ENCODE measurements at regions of chr1 and their contacts with region 1.

Region 1: GRCh38 chr1:32215629-32216480 is 6.3 kb downstream of the TMEM234 start:
- DNase-seq: peak in 8 of 9 experiments; percentile 16 to 74 (median 60)
- ATAC-seq: peak; percentile 97
- H3K4me3 ChIP-seq: no peak overlapping the region
- H3K4me3 Mint-ChIP-seq: no peak overlapping the region
- H3K27ac ChIP-seq: no peak overlapping the region
- H3K27ac Mint-ChIP-seq: peak overlapping the region; percentile 67
- H3K4me1 ChIP-seq: peaks cover 10% of the 10 kb centered on the region
- H3K4me1 Mint-ChIP-seq: peaks cover 14% of the 10 kb centered on the region
- H3K27me3 ChIP-seq: no peaks in the 10 kb centered on the region
- H3K27me3 Mint-ChIP-seq: no peaks in the 10 kb centered on the region
- CTCF ChIP-seq: peak; percentile 66

Region 2: GRCh38 chr1:32200226-32201010 is 15.4 kb before region 1 on chr1 and contains the start of gene CCDC28B:
- CTCF ChIA-PET with region 1: interaction called, 23 read pairs
- POLR2A ChIA-PET with region 1: interaction called, 4 read pairs
- intact Hi-C with region 1: no loop called
- DNase-seq: peak in 8 of 9 experiments; percentile 32 to 81 (median 64)
- ATAC-seq: peak; percentile 49
- H3K4me3 ChIP-seq: peak within 1 kb of the TSS; percentile 69 to 70
- H3K4me3 Mint-ChIP-seq: peak within 1 kb of the TSS; percentile 85
- H3K27ac ChIP-seq: peak within 1 kb of the TSS; percentile 75 to 78
- H3K27ac Mint-ChIP-seq: peak within 1 kb of the TSS; percentile 97
- H3K4me1 ChIP-seq: peaks cover 46% of the 10 kb centered on the region
- H3K4me1 Mint-ChIP-seq: peaks cover 59% of the 10 kb centered on the region
- H3K27me3 ChIP-seq: no peaks in the 10 kb centered on the region
- H3K27me3 Mint-ChIP-seq: no peaks in the 10 kb centered on the region
- CTCF ChIP-seq: no peak
- total RNA-seq, gene CCDC28B: 3.8 to 5.2 TPM

Region 3: DNA sequence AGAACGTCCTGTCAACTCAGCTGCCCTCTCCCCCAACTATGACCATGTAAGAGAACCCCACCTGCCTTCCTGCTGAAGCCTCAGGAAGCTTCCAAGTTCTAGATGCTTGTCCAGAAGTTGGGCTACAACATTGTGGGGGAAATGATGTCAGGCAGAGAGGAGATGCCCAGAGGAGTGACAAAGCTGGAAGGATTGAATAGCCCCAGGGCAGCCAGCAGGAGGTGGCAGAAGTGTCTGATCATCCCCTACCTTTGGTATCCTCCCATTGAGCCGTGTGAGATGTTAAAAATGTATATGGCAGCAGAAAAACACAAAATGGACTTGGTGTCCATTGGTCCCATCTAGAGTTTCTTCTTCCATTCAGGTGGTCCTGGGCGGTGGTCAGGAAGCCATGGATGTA is 12.9 kb after region 1 on chr1:
- CTCF ChIA-PET with region 1: interaction called, 18 read pairs
- POLR2A ChIA-PET with region 1: interaction called, 3 read pairs
- intact Hi-C with region 1: no loop called
- DNase-seq: no peak
- ATAC-seq: no peak
- H3K4me3 ChIP-seq: no peak overlapping the region
- H3K4me3 Mint-ChIP-seq: no peak overlapping the region
- H3K27ac ChIP-seq: no peak overlapping the region
- H3K27ac Mint-ChIP-seq: no peak overlapping the region
- H3K4me1 ChIP-seq: peaks cover 6% of the 10 kb centered on the region
- H3K4me1 Mint-ChIP-seq: peaks cover 18% of the 10 kb centered on the region
- H3K27me3 ChIP-seq: no peaks in the 10 kb centered on the region
- H3K27me3 Mint-ChIP-seq: no peaks in the 10 kb centered on the region
- CTCF ChIP-seq: no peak

Region 4: DNA sequence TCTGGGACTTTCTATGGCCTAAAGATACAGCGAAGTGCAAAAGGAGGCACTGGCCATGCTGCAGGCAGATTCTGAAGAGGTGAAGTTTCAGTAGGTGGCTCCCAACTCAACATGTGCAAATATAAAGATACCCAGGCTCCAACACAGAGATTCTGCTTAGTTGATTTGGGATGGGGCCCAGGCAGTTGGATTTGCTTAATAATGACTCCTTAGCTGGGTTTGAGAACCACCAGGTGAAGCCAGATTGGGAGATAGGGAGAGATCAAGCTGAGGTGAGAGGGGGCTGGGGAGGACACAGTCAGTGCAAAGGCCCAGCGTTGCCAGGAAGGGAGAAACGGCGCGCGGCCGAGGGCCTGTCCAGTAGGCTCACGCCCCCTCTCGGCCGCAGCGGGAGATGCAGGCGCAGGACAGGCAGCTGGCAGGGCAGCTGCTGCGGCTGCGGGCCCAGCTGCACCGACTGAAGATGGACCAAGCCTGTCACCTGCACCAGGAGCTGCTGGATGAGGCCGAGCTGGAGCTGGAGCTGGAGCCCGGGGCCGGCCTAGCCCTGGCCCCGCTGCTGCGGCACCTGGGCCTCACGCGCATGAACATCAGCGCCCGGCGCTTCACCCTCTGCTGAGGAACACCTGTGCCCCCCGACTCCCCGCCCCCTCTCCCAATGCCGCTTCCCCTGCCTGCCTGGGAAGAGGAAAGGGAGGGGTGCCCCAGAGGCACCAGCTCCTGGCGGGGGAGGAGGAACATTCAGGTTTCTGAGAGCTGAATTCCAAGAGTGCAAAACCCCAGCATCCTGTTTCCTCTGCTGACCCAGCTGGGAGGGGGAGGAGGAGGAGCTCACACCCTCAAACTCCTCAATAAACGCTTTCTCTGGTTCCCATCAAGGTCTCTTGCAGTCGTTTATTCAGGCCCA is 32.4 kb after region 1 on chr1:
- CTCF ChIA-PET with region 1: interaction called, 33 read pairs
- POLR2A ChIA-PET with region 1: interaction called, 5 read pairs
- intact Hi-C with region 1: no loop called
- DNase-seq: peak; percentile 51 to 84 (median 76)
- ATAC-seq: peak; percentile 5
- H3K4me3 ChIP-seq: peak overlapping the region; percentile 21 to 28
- H3K4me3 Mint-ChIP-seq: peak overlapping the region; percentile 66
- H3K27ac ChIP-seq: peak overlapping the region; percentile 40 to 93
- H3K27ac Mint-ChIP-seq: peak overlapping the region; percentile 99
- H3K4me1 ChIP-seq: peaks cover 42% of the 10 kb centered on the region
- H3K4me1 Mint-ChIP-seq: peaks cover 44% of the 10 kb centered on the region
- H3K27me3 ChIP-seq: no peaks in the 10 kb centered on the region
- H3K27me3 Mint-ChIP-seq: no peaks in the 10 kb centered on the region
- CTCF ChIP-seq: peak; percentile 86

Region 5: GRCh38 chr1:32273388-32274208 is 57.7 kb after region 1 on chr1:
- CTCF ChIA-PET with region 1: interaction called, 14 read pairs
- POLR2A ChIA-PET with region 1: interaction called, 6 read pairs
- intact Hi-C with region 1: loop called in 1 of 2 experiments (anchors 10 kb)
- DNase-seq: peak; percentile 58 to 96 (median 87)
- ATAC-seq: peak; percentile 88
- H3K4me3 ChIP-seq: peak overlapping the region; percentile 23 to 53
- H3K4me3 Mint-ChIP-seq: peak overlapping the region; percentile 83
- H3K27ac ChIP-seq: peak overlapping the region; percentile 36 to 77
- H3K27ac Mint-ChIP-seq: peak overlapping the region; percentile 98
- H3K4me1 ChIP-seq: peaks cover 78% of the 10 kb centered on the region
- H3K4me1 Mint-ChIP-seq: peaks cover 67% of the 10 kb centered on the region
- H3K27me3 ChIP-seq: no peaks in the 10 kb centered on the region
- H3K27me3 Mint-ChIP-seq: no peaks in the 10 kb centered on the region
- CTCF ChIP-seq: no peak

Region 6: GRCh38 chr1:32372149-32372756 is 156.4 kb after region 1 on chr1:
- CTCF ChIA-PET with region 1: interaction called, 34 read pairs
- POLR2A ChIA-PET with region 1: interaction called, 7 read pairs
- intact Hi-C with region 1: loop called (anchors 1 to 2 kb)
- DNase-seq: peak in 8 of 9 experiments; percentile 27 to 88 (median 67)
- ATAC-seq: peak; percentile 93
- H3K4me3 ChIP-seq: no peak overlapping the region
- H3K4me3 Mint-ChIP-seq: no peak overlapping the region
- H3K27ac ChIP-seq: peak overlapping the region in 1 of 2 experiments; percentile 11
- H3K27ac Mint-ChIP-seq: peak overlapping the region; percentile 78
- H3K4me1 ChIP-seq: peaks cover 11% of the 10 kb centered on the region
- H3K4me1 Mint-ChIP-seq: peaks cover 14% of the 10 kb centered on the region
- H3K27me3 ChIP-seq: no peaks in the 10 kb centered on the region
- H3K27me3 Mint-ChIP-seq: no peaks in the 10 kb centered on the region
- CTCF ChIP-seq: no peak

Region 7: GRCh38 chr1:32400876-32401631 is 185.2 kb after region 1 on chr1:
- CTCF ChIA-PET with region 1: interaction called, 17 read pairs
- POLR2A ChIA-PET with region 1: no interaction called
- intact Hi-C with region 1: no loop called
- DNase-seq: peak in 8 of 9 experiments; percentile 25 to 66 (median 48)
- ATAC-seq: peak; percentile 80
- H3K4me3 ChIP-seq: no peak overlapping the region
- H3K4me3 Mint-ChIP-seq: no peak overlapping the region
- H3K27ac ChIP-seq: no peak overlapping the region
- H3K27ac Mint-ChIP-seq: no peak overlapping the region
- H3K4me1 ChIP-seq: peaks cover 4% of the 10 kb centered on the region
- H3K4me1 Mint-ChIP-seq: no peaks in the 10 kb centered on the region
- H3K27me3 ChIP-seq: no peaks in the 10 kb centered on the region
- H3K27me3 Mint-ChIP-seq: no peaks in the 10 kb centered on the region
- CTCF ChIP-seq: peak; percentile 66